Heart right ventricle (tissue), 16 donors: ENCODE measurements at regions of chr18 and their contacts with region 1.

Region 1: GRCh38 chr18:44826418-44827259 is 146.0 kb downstream of the SETBP1 start:
- DNase-seq: peak in 1 of 2 donors; percentile 88
- ATAC-seq: peak; percentile 62 to 83 (median 74)
- H3K4me3 ChIP-seq: no peak overlapping the region
- H3K27ac ChIP-seq: peak overlapping the region; percentile 1 to 79 (median 60)
- H3K4me1 ChIP-seq: peaks cover 7 to 68% (median 27%) of the 10 kb centered on the region in 9 donors
- H3K27me3 ChIP-seq: no peaks in the 10 kb centered on the region
- CTCF ChIP-seq: no peak

Region 2: DNA sequence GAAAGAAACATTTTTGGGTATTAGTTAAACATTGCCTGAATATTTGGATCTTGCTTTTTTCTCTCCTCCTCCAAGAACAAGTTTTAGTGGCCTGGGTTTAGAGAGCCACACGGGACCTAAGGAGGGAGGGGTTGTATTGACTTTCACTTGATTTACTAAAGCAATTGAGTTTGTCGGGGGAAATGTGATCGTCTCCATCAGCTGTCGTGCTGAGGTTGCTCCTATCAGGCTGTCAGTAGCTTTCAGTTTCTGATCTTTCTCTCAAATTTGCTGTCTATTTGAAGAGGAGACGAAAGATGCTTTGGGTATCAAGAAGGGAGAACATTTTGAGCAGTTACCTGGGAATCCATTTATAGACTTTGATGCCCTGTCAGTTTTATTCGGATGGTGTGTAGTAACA is 40.0 kb before region 1 on chr18:
- intact Hi-C with region 1: loop called in 2 of 10 experiments (anchors 5 kb)
- DNase-seq: no peak
- ATAC-seq: no peak
- H3K4me3 ChIP-seq: peak overlapping the region in 1 of 10 donors; percentile 16
- H3K27ac ChIP-seq: no peak overlapping the region
- H3K4me1 ChIP-seq: peaks cover 8 to 70% (median 24%) of the 10 kb centered on the region in 9 donors
- H3K27me3 ChIP-seq: no peaks in the 10 kb centered on the region
- CTCF ChIP-seq: no peak

Region 3: GRCh38 chr18:44957440-44957839 is 130.8 kb after region 1 on chr18:
- intact Hi-C with region 1: no loop called
- DNase-seq: no peak
- ATAC-seq: peak in 6 of 8 donors; percentile 27 to 78 (median 62)
- H3K4me3 ChIP-seq: no peak overlapping the region
- H3K27ac ChIP-seq: no peak overlapping the region
- H3K4me1 ChIP-seq: peaks cover 0 to 41% (median 24%) of the 10 kb centered on the region in 9 donors
- H3K27me3 ChIP-seq: no peaks in the 10 kb centered on the region
- CTCF ChIP-seq: no peak

Region 4: GRCh38 chr18:45335282-45336043 is 508.8 kb after region 1 on chr18:
- intact Hi-C with region 1: no loop called
- DNase-seq: no peak
- ATAC-seq: no peak
- H3K4me3 ChIP-seq: no peak overlapping the region
- H3K27ac ChIP-seq: no peak overlapping the region
- H3K4me1 ChIP-seq: no peaks in the 10 kb centered on the region
- H3K27me3 ChIP-seq: no peaks in the 10 kb centered on the region
- CTCF ChIP-seq: no peak